GM12878 (cell line): ENCODE measurements at regions of chr17 and their contacts with region 1.

Region 1: GRCh38 chr17:1783834-1784611 is 22.2 kb downstream of the SERPINF1 start:
- DNase-seq: no peak
- ATAC-seq: peak; percentile 77
- H3K4me3 ChIP-seq: no peak overlapping the region
- H3K27ac ChIP-seq: no peak overlapping the region
- H3K4me1 ChIP-seq: no peaks in the 10 kb centered on the region
- H3K27me3 ChIP-seq: no peaks in the 10 kb centered on the region
- CTCF ChIP-seq: peak; percentile 39 to 63 (median 50); a peak in 4 of 6 replicates
- EP300 ChIP-seq: no peak
- POLR2A ChIP-seq: no peak
- RAD21 ChIP-seq: peak; percentile 69

Region 2: DNA sequence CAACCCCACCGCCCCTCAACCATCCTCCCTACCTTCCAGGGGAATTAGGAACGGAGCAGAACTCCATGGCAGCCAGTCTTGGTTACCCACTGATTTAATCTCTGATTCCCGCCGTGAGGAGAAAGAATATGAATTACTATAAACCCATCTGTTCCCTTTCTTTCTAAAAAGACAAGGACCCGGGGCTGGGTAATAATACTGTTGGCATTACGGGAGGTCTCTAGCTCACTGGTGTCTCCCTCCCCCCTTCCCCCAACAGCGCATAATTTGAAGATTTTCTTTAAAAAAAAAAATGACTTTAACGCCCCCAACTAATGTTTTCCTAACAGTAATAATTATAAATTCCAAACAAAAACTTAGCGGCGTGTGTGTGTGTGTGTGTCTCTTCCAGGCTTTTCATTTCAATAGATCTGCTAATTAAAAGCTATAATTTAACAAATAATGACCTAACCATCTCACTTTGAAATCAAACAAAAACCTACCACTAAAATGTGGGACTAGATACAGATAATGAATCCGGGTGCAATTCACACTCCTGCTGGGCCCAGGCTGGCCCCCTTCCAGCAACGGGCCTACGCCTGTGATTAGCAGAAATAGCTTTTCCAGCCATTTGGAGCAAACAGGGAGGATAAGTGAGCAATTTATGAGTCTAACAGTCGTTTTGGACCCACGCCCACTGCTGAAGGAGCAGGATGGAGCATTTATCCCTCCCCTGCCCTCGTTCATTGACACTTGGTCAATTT is 532.0 kb before region 1 on chr17:
- CTCF ChIA-PET with region 1: no interaction called
- POLR2A ChIA-PET with region 1: no interaction called
- RAD21 ChIA-PET with region 1: no interaction called
- SMC1A ChIA-PET with region 1: no interaction called
- in situ Hi-C with region 1: no loop called
- intact Hi-C with region 1: no loop called
- DNase-seq: no peak
- ATAC-seq: no peak
- H3K4me3 ChIP-seq: no peak overlapping the region
- H3K27ac ChIP-seq: no peak overlapping the region
- H3K4me1 ChIP-seq: no peaks in the 10 kb centered on the region
- H3K27me3 ChIP-seq: no peaks in the 10 kb centered on the region
- CTCF ChIP-seq: no peak
- EP300 ChIP-seq: no peak
- POLR2A ChIP-seq: no peak
- RAD21 ChIP-seq: no peak

Region 3: GRCh38 chr17:1267471-1267947 is 516.5 kb before region 1 on chr17:
- CTCF ChIA-PET with region 1: no interaction called
- POLR2A ChIA-PET with region 1: no interaction called
- RAD21 ChIA-PET with region 1: no interaction called
- SMC1A ChIA-PET with region 1: no interaction called
- in situ Hi-C with region 1: no loop called
- intact Hi-C with region 1: no loop called
- DNase-seq: no peak
- ATAC-seq: no peak
- H3K4me3 ChIP-seq: peak overlapping the region; percentile 81
- H3K27ac ChIP-seq: peak overlapping the region; percentile 55
- H3K4me1 ChIP-seq: peaks cover 4% of the 10 kb centered on the region
- H3K27me3 ChIP-seq: no peaks in the 10 kb centered on the region; a peak in 1 of 4 replicates
- CTCF ChIP-seq: no peak
- EP300 ChIP-seq: no peak
- POLR2A ChIP-seq: no peak
- RAD21 ChIP-seq: no peak

Region 4: GRCh38 chr17:1661045-1661444 is 123.0 kb before region 1 on chr17:
- CTCF ChIA-PET with region 1: no interaction called
- POLR2A ChIA-PET with region 1: interaction called, 5 read pairs
- RAD21 ChIA-PET with region 1: no interaction called
- SMC1A ChIA-PET with region 1: no interaction called
- in situ Hi-C with region 1: no loop called
- intact Hi-C with region 1: loop called (anchors 10 kb)
- DNase-seq: no peak
- ATAC-seq: no peak
- H3K4me3 ChIP-seq: no peak overlapping the region
- H3K27ac ChIP-seq: no peak overlapping the region
- H3K4me1 ChIP-seq: no peaks in the 10 kb centered on the region
- H3K27me3 ChIP-seq: no peaks in the 10 kb centered on the region
- CTCF ChIP-seq: no peak
- EP300 ChIP-seq: no peak
- POLR2A ChIP-seq: peak; percentile 5; the same call in 1 of the 2 replicates
- RAD21 ChIP-seq: no peak

Region 5: GRCh38 chr17:1673041-1673785 is 110.8 kb before region 1 on chr17:
- CTCF ChIA-PET with region 1: interaction called, 16 read pairs
- POLR2A ChIA-PET with region 1: interaction called, 3 read pairs
- RAD21 ChIA-PET with region 1: interaction called, 4 read pairs
- SMC1A ChIA-PET with region 1: interaction called, 3 read pairs
- in situ Hi-C with region 1: no loop called
- intact Hi-C with region 1: loop called (anchors 10 kb)
- DNase-seq: no peak
- ATAC-seq: no peak
- H3K4me3 ChIP-seq: no peak overlapping the region
- H3K27ac ChIP-seq: no peak overlapping the region
- H3K4me1 ChIP-seq: no peaks in the 10 kb centered on the region
- H3K27me3 ChIP-seq: no peaks in the 10 kb centered on the region
- CTCF ChIP-seq: no peak
- EP300 ChIP-seq: no peak
- POLR2A ChIP-seq: peak; percentile 66
- RAD21 ChIP-seq: no peak

Region 6: DNA sequence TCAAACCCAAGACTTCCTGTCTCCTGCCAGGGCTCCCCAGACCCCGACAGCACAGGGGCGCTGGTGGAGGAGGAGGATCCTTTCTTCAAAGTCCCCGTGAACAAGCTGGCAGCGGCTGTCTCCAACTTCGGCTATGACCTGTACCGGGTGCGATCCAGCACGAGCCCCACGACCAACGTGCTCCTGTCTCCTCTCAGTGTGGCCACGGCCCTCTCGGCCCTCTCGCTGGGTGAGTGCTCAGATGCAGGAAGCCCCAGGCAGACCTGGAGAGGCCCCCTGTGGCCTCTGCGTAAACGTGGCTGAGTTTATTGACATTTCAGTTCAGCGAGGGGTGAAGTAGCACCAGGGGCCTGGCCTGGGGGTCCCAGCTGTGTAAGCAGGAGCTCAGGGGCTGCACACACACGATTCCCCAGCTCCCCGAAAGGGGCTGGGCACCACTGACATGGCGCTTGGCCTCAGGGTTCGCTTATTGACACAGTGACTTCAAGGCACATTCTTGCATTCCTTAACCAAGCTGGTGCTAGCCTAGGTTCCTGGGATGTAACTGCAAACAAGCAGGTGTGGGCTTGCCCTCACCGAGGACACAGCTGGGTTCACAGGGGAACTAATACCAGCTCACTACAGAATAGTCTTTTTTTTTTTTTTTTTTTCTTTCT is 14.1 kb before region 1 on chr17:
- CTCF ChIA-PET with region 1: interaction called, 6 read pairs
- POLR2A ChIA-PET with region 1: interaction called, 10 read pairs
- RAD21 ChIA-PET with region 1: interaction called, 3 read pairs
- SMC1A ChIA-PET with region 1: interaction called, 4 read pairs
- in situ Hi-C with region 1: no loop called
- intact Hi-C with region 1: no loop called
- DNase-seq: no peak
- ATAC-seq: no peak; the same call in 2 of the 3 replicates
- H3K4me3 ChIP-seq: no peak overlapping the region
- H3K27ac ChIP-seq: no peak overlapping the region
- H3K4me1 ChIP-seq: peaks cover 7% of the 10 kb centered on the region
- H3K27me3 ChIP-seq: no peaks in the 10 kb centered on the region
- CTCF ChIP-seq: no peak
- EP300 ChIP-seq: no peak
- POLR2A ChIP-seq: 0 out of 2 replicates have a peak, but pooled peaks have one; percentile 29
- RAD21 ChIP-seq: no peak

Region 7: DNA sequence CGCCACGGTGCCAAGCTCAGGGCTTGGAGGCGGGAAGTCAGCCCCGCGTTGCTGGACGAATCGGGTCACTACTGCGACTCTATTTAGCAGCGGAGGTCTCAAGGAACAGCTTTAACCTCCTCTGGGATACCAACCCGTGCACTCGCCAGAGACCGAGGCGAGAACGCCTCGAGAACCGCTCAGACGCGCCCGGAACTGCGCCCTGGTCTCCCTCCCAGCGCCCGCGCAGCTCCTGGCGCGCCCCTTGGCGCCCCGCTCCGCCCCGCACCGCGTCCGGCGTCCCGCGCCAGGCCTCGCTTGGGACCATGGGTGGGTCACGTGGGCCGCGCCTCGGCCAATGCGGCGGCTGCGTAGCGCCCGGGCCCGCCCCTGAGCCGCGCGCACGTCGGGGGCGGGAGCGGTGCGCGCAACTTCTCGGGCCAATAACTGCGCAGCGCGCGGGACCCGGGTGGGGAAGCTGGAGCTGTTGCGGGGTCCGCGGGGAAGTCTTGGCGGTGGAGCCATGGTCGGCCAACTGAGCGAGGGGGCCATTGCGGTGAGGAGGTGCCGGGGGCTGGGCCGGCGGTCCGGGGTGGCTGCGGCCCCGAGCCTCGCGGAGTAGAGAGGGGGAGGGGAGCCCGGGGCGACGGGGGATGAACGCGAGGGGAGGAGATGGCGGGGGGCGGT is 45.7 kb after region 1 on chr17 and contains the starts of genes RPA1 and SMYD4:
- CTCF ChIA-PET with region 1: interaction called, 11 read pairs
- POLR2A ChIA-PET with region 1: interaction called, 5 read pairs
- RAD21 ChIA-PET with region 1: no interaction called
- SMC1A ChIA-PET with region 1: no interaction called
- in situ Hi-C with region 1: no loop called
- intact Hi-C with region 1: no loop called
- DNase-seq: peak; percentile 48
- ATAC-seq: peak; percentile 97
- H3K4me3 ChIP-seq: peak within 1 kb of the TSS; percentile 98
- H3K27ac ChIP-seq: peak within 1 kb of the TSS; percentile 83
- H3K4me1 ChIP-seq: peaks cover 15% of the 10 kb centered on the region
- H3K27me3 ChIP-seq: no peaks in the 10 kb centered on the region
- CTCF ChIP-seq: no peak
- EP300 ChIP-seq: no peak
- POLR2A ChIP-seq: peak; percentile 87
- RAD21 ChIP-seq: no peak
- polyA plus RNA-seq, gene RPA1: 35.9 to 50.6 TPM
- polyA plus RNA-seq, gene SMYD4: 2.1 to 2.6 TPM